Activated T-helper 1 cell treated with anti-CD3 and anti-CD28 coated beads, Interleukin-12 subunit alpha, Interleukin-12 subunit beta, Interleukin-2, Interleukin-4 antibody, amounts not matched to agents 30 ng/mL and 10 ng/mL and 1 ng/mL, durations not matched to agents 14 hours and 24 hours and 36 hours (primary cell): ENCODE measurements at regions of chr9 and their contacts with region 1.

Region 1: DNA sequence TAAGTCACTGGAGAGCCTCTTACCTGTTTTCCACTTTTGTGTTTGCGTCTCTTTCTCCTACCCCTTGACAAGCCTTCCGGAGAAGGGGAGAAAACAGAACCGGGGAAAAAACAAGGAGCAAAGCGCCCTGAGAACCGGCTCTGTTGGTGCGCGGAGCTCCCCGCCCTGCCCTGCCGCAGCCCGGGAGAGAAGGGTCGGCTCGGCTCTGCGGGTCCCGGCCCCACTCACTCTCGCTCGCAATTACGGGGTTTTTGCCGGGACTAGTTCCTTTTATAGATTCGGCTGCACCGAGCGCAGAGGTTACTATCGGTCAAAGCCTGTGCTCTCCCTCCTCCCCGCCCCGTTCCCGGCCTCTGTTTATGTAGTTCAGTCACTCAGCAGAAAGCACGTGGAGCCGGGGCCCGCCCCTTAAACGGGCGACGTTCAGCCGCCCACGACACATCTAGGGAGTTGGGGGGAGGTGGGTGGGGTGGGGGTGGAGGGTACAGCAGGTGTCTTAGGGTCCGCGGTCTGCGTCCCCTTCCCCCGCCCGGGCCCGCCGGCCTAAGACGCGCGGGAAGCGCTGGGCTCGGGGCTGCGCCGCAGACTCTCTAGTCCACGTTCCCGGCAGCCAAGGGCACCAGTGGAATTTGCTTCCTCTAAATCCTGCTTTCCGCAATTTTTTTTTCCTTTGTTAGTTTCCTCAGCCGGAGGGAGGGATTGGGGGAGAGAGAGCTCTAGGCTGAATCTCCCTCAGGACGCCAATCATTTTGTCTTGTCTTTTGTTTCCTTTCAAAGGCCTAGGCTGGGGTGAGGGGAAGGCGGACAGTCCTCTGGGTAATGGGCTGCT is at the start of gene ABCA1:
- DNase-seq: peak; percentile 61
- H3K4me3 Mint-ChIP-seq: peak within 1 kb of the TSS; percentile 86
- H3K27ac Mint-ChIP-seq: peak within 1 kb of the TSS; percentile 51
- H3K4me1 Mint-ChIP-seq: peaks cover 16% of the 10 kb centered on the region
- H3K27me3 Mint-ChIP-seq: peaks cover 16% of the 10 kb centered on the region
- total RNA-seq, gene ABCA1: 1.1 and 1.3 TPM in 2 replicates

Region 2: DNA sequence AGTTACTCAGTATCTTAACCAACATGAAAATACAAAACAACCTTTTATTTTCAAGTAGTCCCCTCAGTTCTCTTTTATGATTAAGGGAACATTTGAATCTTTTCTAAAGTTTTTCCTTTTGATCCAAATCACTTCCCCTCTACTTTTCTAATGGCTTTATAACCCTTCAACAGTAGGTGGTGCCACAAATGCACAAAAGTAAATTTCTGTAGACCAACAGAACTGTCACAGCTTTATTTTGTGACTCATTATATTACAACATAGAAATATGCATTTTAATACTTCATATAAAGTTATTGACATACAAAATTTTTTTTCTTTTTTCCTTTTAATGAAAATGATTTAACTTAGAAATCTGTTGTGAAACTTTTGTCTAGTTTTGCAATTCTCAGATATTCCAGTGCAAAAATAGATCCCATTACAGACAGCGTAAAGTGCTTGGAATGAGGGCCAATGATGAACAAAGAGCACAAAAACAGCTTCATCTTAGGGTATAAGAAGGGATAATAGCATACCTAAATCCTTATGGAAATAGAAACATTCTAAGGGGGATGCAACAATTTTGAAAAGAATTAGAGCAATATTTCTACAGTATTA is 147.2 kb before region 1 on chr9:
- intact Hi-C with region 1: no loop called
- DNase-seq: no peak
- H3K4me3 Mint-ChIP-seq: no peak overlapping the region
- H3K27ac Mint-ChIP-seq: no peak overlapping the region
- H3K4me1 Mint-ChIP-seq: no peaks in the 10 kb centered on the region
- H3K27me3 Mint-ChIP-seq: no peaks in the 10 kb centered on the region

Region 3: GRCh38 chr9:104863180-104863883 is 64.8 kb before region 1 on chr9:
- intact Hi-C with region 1: loop called (anchors 5 kb)
- DNase-seq: peak; percentile 28
- H3K4me3 Mint-ChIP-seq: no peak overlapping the region
- H3K27ac Mint-ChIP-seq: peak overlapping the region; percentile 5
- H3K4me1 Mint-ChIP-seq: no peaks in the 10 kb centered on the region
- H3K27me3 Mint-ChIP-seq: no peaks in the 10 kb centered on the region

Region 4: GRCh38 chr9:104968025-104968982 is 40.2 kb after region 1 on chr9:
- intact Hi-C with region 1: loop called (anchors 1 kb)
- DNase-seq: peak; percentile 84
- H3K4me3 Mint-ChIP-seq: peak overlapping the region; percentile 92
- H3K27ac Mint-ChIP-seq: peak overlapping the region; percentile 66
- H3K4me1 Mint-ChIP-seq: peaks cover 13% of the 10 kb centered on the region
- H3K27me3 Mint-ChIP-seq: peaks cover 21% of the 10 kb centered on the region

Region 5: DNA sequence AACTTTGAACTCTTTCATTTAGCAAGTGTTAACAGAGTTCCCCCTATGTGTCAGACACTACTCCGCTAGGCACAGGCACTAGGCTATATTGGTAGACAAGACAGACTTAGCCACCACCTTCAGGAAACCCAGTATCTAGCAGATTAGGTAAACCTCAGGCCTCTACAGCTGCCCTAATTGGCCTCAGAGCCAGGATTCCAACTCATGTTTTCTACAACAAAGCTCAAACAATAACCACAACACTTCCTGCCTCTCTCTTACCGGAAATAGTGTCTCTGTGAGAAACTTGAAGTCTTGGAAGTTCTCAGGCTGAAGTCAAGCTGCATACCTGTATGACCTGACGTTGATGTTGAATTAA is 199.7 kb after region 1 on chr9:
- intact Hi-C with region 1: loop called (anchors 1 kb)
- DNase-seq: peak; percentile 73
- H3K4me3 Mint-ChIP-seq: no peak overlapping the region
- H3K27ac Mint-ChIP-seq: no peak overlapping the region
- H3K4me1 Mint-ChIP-seq: peaks cover 38% of the 10 kb centered on the region
- H3K27me3 Mint-ChIP-seq: peaks cover 15% of the 10 kb centered on the region

Region 6: GRCh38 chr9:105357937-105358336 is 429.8 kb after region 1 on chr9:
- intact Hi-C with region 1: loop called (anchors 5 kb)
- DNase-seq: no peak
- H3K4me3 Mint-ChIP-seq: no peak overlapping the region
- H3K27ac Mint-ChIP-seq: no peak overlapping the region
- H3K4me1 Mint-ChIP-seq: peaks cover 18% of the 10 kb centered on the region
- H3K27me3 Mint-ChIP-seq: no peaks in the 10 kb centered on the region